ENCODE measurements at regions of chr1 and their contacts with region 1.

Region 1: DNA sequence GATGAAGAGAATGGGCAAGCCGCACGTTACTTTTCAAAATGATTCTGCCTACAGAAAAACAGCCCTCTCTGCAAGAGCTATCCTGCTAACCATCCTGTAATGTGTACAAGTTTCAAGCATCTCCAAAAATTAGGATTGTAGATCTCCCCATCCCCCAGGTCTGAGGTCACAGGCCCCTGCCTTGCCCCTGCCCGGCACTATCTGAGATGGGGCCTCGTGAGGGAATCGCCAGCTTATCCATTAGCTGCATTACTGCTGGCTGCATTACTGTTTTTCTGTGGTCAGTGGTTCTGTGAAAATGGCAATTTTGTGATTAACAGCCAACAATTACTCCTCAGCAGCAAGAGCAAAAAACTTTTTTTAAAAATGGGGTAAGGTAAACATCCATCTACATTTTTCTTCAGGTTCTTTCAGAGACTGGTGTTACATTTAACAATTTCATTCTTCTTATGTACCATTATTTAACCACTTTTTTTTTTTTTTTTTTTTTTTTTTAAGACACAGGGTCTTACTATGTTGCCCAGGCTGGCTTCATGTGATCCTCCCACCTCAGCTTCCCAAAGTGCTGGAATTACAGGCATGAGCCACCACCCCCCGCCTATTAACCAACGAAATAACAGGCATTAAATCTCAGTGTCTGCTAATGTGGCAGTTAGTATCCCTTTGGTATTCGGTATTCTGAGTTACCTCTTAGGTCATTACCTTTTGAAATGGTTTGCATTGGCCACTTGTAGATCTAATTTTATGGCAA is 83.8 kb downstream of the MRPL37 start:
- DNase-seq: no peak
- ATAC-seq: no peak
- H3K4me3 ChIP-seq: no peak overlapping the region
- H3K4me3 Mint-ChIP-seq: peak overlapping the region in 1 of 3 donors; percentile 51
- H3K27ac ChIP-seq: no peak overlapping the region
- H3K27ac Mint-ChIP-seq: peak overlapping the region; percentile 74 to 77
- H3K4me1 ChIP-seq: peaks cover 60 to 92% of the 10 kb centered on the region in 2 experiments
- H3K4me1 Mint-ChIP-seq: peaks cover 71 to 76% (median 75%) of the 10 kb centered on the region in 3 donors
- H3K27me3 ChIP-seq: no peaks in the 10 kb centered on the region
- H3K27me3 Mint-ChIP-seq: no peaks in the 10 kb centered on the region

Region 2: DNA sequence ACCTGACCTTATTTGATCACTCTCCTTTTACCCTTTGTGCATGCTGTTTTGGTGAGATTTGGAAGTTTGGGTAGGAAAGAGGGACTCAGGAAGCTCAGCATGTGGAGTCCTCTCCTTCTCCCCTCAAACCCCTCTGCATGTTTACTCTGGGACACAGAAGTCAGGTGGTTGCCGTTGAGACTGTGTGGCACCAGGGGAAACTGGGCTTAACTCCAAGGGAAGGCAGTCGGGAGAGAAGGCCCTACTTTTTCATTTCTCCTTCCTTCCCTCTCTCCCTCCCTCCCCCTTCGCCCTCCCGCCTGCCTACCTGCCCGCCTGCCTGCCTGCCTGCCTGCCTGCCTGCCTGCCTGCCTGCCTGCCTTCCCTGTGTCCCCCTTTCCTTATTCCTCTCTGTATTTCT is 552.2 kb after region 1 on chr1:
- CTCF ChIA-PET with region 1: interaction called in 1 of 2 experiments, 10 read pairs
- POLR2A ChIA-PET with region 1: no interaction called
- DNase-seq: no peak
- ATAC-seq: no peak
- H3K4me3 ChIP-seq: no peak overlapping the region
- H3K4me3 Mint-ChIP-seq: no peak overlapping the region
- H3K27ac ChIP-seq: no peak overlapping the region
- H3K27ac Mint-ChIP-seq: no peak overlapping the region
- H3K4me1 ChIP-seq: no peaks in the 10 kb centered on the region
- H3K4me1 Mint-ChIP-seq: no peaks in the 10 kb centered on the region
- H3K27me3 ChIP-seq: no peaks in the 10 kb centered on the region
- H3K27me3 Mint-ChIP-seq: peaks cover 2 to 6% of the 10 kb centered on the region in 2 donors

Measured in T-cell (primary cell).